OCI-LY7 (cell line): ENCODE measurements at regions of chr10 and their contacts with region 1.

Region 1: GRCh38 chr10:511101-511848 is 178.2 kb downstream of the DIP2C start:
- DNase-seq: peak; percentile 91
- H3K4me3 ChIP-seq: peak overlapping the region; percentile 69
- H3K27ac ChIP-seq: peak overlapping the region; percentile 100
- H3K4me1 ChIP-seq: peaks cover 63% of the 10 kb centered on the region
- CTCF ChIP-seq: peak; percentile 98

Region 2: DNA sequence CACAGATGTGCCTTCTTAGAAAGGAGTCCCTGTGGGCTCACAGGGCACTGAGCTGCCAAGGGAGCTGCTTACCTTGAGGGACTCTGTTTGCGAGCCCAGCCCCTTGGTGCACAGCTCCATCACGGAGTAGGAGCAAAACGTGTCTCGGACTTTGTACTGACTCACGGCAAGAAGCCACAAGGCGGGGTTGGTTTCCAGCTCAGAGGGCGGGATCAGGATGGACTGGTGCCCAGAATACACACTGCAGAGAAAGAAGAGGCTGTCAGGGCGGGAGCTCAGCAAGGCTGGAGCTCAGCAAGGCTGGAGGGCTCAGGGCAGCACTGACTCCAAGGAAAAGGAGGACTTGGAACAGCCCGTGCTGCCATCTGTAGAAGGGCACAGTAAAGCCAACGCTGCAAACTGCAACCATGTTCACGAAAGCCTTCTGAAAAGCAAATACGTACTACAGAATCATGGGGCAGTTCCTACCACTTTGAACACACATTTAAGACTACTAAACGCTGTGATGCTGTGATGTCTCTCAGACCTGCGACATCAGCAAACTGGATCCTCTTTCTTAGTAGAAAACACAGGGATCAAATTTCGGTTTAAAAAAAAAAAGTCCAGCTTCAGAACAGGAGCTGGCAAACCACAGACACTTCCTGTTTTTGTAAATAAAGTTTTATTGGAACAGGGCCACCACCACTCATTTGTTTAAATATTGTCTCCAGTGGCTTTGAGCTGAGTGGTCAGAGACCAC is 181.7 kb before region 1 on chr10:
- CTCF ChIA-PET with region 1: interaction called, 3 read pairs
- POLR2A ChIA-PET with region 1: interaction called, 11 read pairs
- intact Hi-C with region 1: loop called (anchors 2 kb)
- DNase-seq: peak; percentile 82
- H3K4me3 ChIP-seq: peak overlapping the region; percentile 57
- H3K27ac ChIP-seq: peak overlapping the region; percentile 51
- H3K4me1 ChIP-seq: peaks cover 89% of the 10 kb centered on the region
- CTCF ChIP-seq: no peak

Region 3: DNA sequence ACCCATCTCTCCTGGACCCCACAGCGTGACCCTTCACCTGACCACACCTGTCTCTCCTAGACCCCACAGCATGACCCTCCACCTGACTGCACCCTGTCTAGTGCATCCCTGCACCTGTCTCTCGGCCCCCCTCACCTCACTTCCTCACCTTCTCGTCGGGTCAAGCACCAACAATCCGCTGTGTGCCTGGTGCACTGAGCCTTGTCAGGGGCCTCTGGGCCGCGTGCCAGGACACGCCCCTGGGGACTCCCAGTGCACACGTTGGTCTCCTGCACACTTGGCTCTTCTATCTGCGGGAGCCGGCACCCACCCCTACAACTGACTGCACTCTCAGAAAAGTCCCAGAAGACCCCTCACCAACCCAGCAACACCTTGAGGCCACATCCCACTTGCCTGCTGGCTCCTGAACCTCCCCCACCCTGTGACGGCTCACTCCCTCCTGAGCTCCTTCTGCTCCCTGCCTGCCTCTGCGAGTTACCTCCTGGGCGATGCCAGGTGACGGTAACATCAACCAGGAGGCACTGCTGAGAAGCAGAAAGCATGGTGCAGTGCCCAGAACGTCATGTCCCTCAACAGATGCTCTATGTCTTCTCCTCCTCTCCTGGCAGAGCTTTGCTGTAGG is 30.6 kb after region 1 on chr10:
- CTCF ChIA-PET with region 1: no interaction called
- POLR2A ChIA-PET with region 1: interaction called, 4 read pairs
- intact Hi-C with region 1: loop called (anchors 1 kb)
- DNase-seq: peak; percentile 93
- H3K4me3 ChIP-seq: peak overlapping the region; percentile 29
- H3K27ac ChIP-seq: peak overlapping the region; percentile 16
- H3K4me1 ChIP-seq: peaks cover 55% of the 10 kb centered on the region
- CTCF ChIP-seq: no peak

Region 4: GRCh38 chr10:810351-810846 is 299.1 kb after region 1 on chr10:
- CTCF ChIA-PET with region 1: interaction called, 3 read pairs
- POLR2A ChIA-PET with region 1: no interaction called
- intact Hi-C with region 1: loop called (anchors 1 kb)
- DNase-seq: peak; percentile 50
- H3K4me3 ChIP-seq: no peak overlapping the region
- H3K27ac ChIP-seq: no peak overlapping the region
- H3K4me1 ChIP-seq: no peaks in the 10 kb centered on the region
- CTCF ChIP-seq: peak; percentile 69

Region 5: GRCh38 chr10:1048732-1049424 is 537.6 kb after region 1 on chr10 and contains the start of gene IDI1:
- CTCF ChIA-PET with region 1: no interaction called
- POLR2A ChIA-PET with region 1: interaction called, 7 read pairs
- intact Hi-C with region 1: loop called (anchors 5 kb)
- DNase-seq: peak; percentile 99
- H3K4me3 ChIP-seq: peak within 1 kb of the TSS; percentile 74
- H3K27ac ChIP-seq: peak within 1 kb of the TSS; percentile 83
- H3K4me1 ChIP-seq: peaks cover 48% of the 10 kb centered on the region
- CTCF ChIP-seq: no peak
- total RNA-seq, gene IDI1: 98.2 and 112 TPM in 2 replicates